Naive thymus-derived CD8-positive, alpha-beta T cell (primary cell): ENCODE measurements at regions of chr17 and their contacts with region 1.

Region 1: GRCh38 chr17:17280613-17281549 is at the start of gene COPS3:
- DNase-seq: peak; percentile 94 to 99 (median 97)
- ATAC-seq: peak; percentile 89 to 92
- H3K4me3 Mint-ChIP-seq: peak within 1 kb of the TSS; percentile 87 to 98 (median 92)
- H3K27ac Mint-ChIP-seq: peak within 1 kb of the TSS; percentile 92 to 99 (median 96)
- H3K4me1 Mint-ChIP-seq: peaks cover 14 to 51% (median 43%) of the 10 kb centered on the region in 4 donors
- H3K27me3 Mint-ChIP-seq: no peaks in the 10 kb centered on the region
- polyA plus RNA-seq, gene COPS3: 76.6 to 98.0 (median 81.2) TPM

Region 2: GRCh38 chr17:17220529-17220928 is 60.4 kb before region 1 on chr17:
- POLR2A ChIA-PET with region 1: no interaction called
- DNase-seq: no peak
- ATAC-seq: no peak
- H3K4me3 Mint-ChIP-seq: no peak overlapping the region
- H3K27ac Mint-ChIP-seq: peak overlapping the region in 1 of 10 donors; percentile 38
- H3K4me1 Mint-ChIP-seq: peaks cover 0 to 7% (median 0%) of the 10 kb centered on the region in 4 donors
- H3K27me3 Mint-ChIP-seq: no peaks in the 10 kb centered on the region

Region 3: GRCh38 chr17:17303010-17303846 is 22.3 kb after region 1 on chr17 and contains the start of gene NT5M:
- POLR2A ChIA-PET with region 1: interaction called, 11 read pairs
- DNase-seq: peak in 9 of 10 donors; percentile 44 to 78 (median 59)
- ATAC-seq: peak; percentile 60 to 75
- H3K4me3 Mint-ChIP-seq: peak within 1 kb of the TSS; percentile 81 to 93 (median 91)
- H3K27ac Mint-ChIP-seq: peak within 1 kb of the TSS; percentile 25 to 93 (median 90)
- H3K4me1 Mint-ChIP-seq: peaks cover 12 to 39% (median 32%) of the 10 kb centered on the region in 4 donors
- H3K27me3 Mint-ChIP-seq: no peaks in the 10 kb centered on the region
- polyA plus RNA-seq, gene NT5M: 1.5 to 5.5 (median 1.9) TPM